ENCODE measurements at regions of chr1 and their contacts with region 1.

Region 1: DNA sequence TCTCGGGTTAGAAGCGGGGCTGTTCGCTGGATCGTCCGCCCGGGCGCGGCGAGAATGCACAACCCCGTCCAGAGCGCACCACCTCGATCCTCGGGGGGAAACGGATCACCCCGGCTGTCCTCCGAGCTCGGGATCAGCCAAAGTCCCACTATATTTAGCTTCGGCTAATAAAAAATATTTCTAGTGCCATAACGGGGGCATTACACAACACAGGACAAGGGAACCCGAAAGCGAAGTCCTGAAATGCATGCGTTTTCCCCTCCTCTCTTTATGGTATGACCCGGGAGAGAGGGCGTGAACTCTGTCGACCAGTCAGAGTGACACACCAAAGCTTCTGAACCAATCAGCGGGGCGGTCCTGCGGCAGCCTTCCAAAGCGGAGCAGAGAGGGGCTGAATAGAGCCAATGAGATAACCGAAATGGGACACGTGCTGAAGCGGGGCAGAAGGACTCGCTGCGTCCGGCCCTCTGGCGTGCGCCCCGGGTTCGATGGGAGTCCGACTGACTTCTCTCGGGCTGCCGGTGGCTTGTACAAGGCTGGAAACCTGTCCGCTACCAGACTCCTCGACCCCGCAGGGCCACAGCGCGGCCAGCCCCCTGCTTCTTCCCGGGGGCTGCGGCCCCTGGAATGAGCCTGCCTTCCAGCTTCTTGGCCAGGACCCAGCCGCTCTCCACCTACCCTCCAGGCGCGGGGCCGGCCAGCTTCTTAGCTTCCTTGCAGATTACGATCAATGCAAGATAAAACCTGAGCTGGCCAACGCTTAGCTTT is at the start of gene ALDH4A1:
- DNase-seq: peak; percentile 96 to 99
- ATAC-seq: peak; percentile 96 to 98 (median 98)
- H3K4me3 ChIP-seq: peak within 1 kb of the TSS; percentile 68 to 96 (median 81)
- H3K27ac ChIP-seq: peak within 1 kb of the TSS; percentile 85 to 96 (median 92)
- H3K4me1 ChIP-seq: peaks cover 12 to 40% (median 35%) of the 10 kb centered on the region in 9 donors
- H3K27me3 ChIP-seq: no peaks in the 10 kb centered on the region
- CTCF ChIP-seq: peak in 3 of 9 donors; percentile 3 to 17 (median 7)
- total RNA-seq, gene ALDH4A1: 18.5 to 60.8 (median 44.7) TPM

Region 2: DNA sequence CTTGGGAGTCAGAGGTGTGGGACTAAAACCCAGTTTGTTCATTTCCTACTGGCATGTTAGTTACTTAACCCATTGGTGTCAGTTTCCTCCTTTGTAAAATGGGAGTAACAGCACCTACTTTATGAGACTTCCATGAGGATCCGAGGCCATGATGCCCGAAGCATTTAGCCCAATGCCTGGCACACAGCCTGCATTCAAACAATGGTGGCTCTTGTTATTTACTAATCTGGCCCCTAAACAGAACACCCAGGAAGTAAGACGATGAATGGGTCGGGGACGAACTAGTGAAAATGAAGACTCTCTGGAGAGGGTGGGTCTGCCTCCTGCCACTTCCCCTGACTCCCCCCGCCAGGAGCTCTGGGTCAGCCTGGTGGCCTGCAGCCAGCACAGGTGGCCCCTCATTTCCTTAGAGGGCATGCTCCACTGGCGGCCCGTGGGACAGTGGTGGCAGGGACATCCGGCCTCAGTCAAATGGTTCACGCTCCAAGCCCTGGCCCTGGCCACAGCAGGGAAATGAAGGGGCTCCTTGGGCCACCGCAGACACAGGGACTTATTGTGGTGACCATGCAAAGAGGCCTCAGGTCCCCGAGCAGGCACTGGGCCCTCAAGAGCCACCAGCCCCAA is 33.8 kb before region 1 on chr1:
- intact Hi-C with region 1: no loop called
- DNase-seq: no peak
- ATAC-seq: no peak
- H3K4me3 ChIP-seq: no peak overlapping the region
- H3K27ac ChIP-seq: no peak overlapping the region
- H3K4me1 ChIP-seq: no peaks in the 10 kb centered on the region
- H3K27me3 ChIP-seq: peaks cover 0 to 26% (median 4%) of the 10 kb centered on the region in 7 donors
- CTCF ChIP-seq: no peak

Region 3: DNA sequence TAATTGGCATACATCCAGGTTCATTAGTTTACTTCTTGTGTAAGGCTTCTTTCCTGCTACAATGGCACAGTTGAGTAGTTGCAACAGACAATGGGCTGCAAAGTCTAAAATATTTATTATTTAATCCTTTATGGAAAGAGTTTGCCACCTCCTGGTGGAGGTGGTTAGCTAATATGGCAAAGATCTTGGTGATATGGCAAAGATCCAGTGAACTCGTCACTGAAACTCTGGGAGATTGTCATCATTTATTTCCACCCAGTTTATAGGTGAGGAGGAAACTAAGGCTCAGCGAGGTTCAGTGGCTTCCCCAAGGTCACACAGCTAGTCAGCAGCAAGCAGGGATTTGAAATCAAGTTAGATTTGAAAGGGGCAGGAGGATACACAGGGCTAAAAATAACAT is 69.8 kb after region 1 on chr1:
- intact Hi-C with region 1: loop called in 4 of 10 experiments (anchors 5 kb)
- DNase-seq: no peak
- ATAC-seq: peak in 3 of 8 donors; percentile 37 to 53 (median 42)
- H3K4me3 ChIP-seq: no peak overlapping the region
- H3K27ac ChIP-seq: no peak overlapping the region
- H3K4me1 ChIP-seq: peaks cover 0 to 14% (median 4%) of the 10 kb centered on the region in 9 donors
- H3K27me3 ChIP-seq: peaks cover 0 to 9% (median 0%) of the 10 kb centered on the region in 7 donors
- CTCF ChIP-seq: peak in 8 of 9 donors; percentile 10 to 65 (median 42)

Region 4: DNA sequence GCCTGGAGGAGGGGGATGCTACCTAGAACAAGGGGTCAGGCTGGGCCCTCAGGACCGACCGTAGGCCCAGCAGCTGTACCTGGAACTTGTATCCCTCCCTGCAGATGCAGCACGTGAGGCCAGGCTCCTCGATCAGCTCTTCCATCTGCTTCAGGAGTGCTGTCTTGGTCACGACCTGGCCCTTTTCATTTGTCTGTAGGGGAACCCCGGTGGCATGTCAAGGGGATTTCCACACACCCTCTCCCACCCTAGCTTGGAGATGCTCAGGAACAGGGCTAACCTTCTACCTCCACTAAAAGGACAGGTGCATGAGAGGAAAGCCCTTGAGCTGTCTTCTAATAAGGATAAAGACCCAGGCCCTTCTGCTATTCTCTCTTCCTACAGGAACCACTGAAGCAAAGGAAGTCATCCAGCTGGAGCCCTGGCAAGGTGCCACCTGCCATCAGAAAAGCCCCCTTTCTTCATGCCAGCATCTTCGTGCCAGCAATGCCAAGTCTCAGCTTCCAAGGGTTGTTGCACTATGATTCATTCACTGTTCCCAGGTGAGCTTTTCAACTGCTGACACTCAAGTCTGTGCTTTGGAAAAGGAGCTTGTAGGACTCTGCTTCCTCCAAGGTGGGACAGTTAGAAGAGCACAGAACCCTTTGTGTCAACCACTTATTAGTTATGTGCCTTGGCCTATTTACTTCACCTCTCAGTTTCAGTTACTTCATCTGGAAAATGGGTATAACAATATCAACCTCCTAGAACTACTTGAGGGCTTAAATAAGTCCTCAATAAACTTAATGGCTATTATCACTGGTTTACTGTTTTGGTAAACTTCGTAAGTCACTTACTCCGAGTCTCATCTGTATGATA is 185.3 kb after region 1 on chr1:
- intact Hi-C with region 1: loop called in 5 of 10 experiments (anchors 5 kb)
- DNase-seq: no peak
- ATAC-seq: no peak
- H3K4me3 ChIP-seq: no peak overlapping the region
- H3K27ac ChIP-seq: no peak overlapping the region
- H3K4me1 ChIP-seq: peaks cover 0 to 31% (median 11%) of the 10 kb centered on the region in 9 donors
- H3K27me3 ChIP-seq: no peaks in the 10 kb centered on the region
- CTCF ChIP-seq: no peak

Region 5: DNA sequence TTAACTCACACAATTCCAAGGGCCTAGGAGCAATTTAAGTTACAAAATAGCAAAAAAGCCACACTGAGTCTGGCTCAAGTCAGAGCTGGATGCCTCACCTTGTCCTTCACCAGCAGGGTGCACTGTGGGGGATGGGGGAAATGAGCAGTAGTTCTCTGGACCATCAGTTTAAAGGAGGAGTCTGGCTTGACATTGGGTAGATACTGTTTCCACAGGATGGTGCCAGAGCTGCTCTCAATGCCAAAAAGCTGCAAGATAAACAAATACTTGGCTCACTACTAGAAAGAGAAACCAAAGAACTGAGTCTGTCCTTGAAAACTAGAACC is 329.8 kb after region 1 on chr1:
- intact Hi-C with region 1: loop called in 1 of 10 experiments (anchors 10 kb)
- DNase-seq: peak in 1 of 2 donors; percentile 56
- ATAC-seq: peak; percentile 59 to 94 (median 88)
- H3K4me3 ChIP-seq: no peak overlapping the region
- H3K27ac ChIP-seq: peak overlapping the region in 7 of 10 donors; percentile 13 to 64 (median 52)
- H3K4me1 ChIP-seq: peaks cover 0 to 22% (median 11%) of the 10 kb centered on the region in 9 donors
- H3K27me3 ChIP-seq: no peaks in the 10 kb centered on the region
- CTCF ChIP-seq: peak in 4 of 9 donors; percentile 10 to 33 (median 12)

Measured in heart right ventricle (tissue), 16 donors.